ENCODE measurements at regions of chr6 and their contacts with region 1.

Region 1: DNA sequence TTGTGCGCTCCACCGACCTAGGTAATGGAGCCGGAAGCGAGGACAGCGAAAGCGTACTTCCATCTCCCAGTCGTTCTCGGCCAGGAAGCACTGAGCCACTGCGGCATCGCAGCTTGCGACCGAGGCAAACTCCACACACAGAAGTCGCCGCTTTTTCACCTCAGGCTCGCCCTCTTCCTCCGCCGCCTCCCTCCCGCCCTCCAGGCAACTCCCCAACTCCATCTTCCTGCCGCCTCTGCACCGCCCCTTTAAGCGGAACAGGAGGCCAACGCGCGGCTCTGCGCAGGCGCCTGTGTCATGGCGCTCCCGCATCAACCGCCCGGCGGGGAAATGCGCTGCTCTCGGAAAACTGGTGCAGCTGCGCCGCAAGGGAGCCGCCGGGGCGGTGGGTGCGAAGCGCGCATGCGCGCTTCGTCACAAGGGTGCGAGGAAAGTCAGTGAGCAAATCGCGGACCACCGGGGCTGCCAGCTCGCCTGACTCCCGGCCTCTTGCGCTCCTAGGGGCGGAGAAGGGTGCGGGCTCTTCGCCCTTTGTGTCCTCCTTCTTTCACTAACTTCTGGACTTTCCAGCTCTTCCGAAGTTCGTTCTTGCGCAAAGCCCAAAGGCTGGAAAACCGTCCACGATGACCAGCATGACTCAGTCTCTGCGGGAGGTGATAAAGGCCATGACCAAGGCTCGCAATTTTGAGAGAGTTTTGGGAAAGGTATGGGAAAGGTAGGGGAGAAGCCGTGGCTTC is at the starts of genes ACOT13 and TDP2:
- DNase-seq: peak; percentile 83 to 98 (median 94)

Region 2: DNA sequence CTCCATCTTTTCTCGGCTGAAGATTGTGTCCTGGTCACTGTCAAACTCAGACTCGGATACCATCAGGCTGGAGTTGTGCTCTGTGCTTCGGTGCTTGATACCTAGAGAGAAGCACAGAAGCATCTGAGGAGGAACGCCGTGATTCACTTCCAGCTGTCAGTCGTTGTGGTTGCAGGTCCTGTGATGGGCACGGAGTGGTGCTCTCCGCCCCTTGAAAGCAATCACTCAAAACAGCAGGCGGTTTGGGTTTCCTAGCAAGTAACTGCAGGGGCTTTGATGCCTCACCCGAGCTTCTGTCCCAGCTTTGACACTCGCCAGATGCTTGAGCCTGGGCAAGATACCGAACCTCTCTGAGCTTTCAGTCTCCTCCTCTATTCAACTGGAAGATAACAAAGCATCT is 119.6 kb before region 1 on chr6:
- intact Hi-C with region 1: no loop called
- DNase-seq: no peak

Region 3: DNA sequence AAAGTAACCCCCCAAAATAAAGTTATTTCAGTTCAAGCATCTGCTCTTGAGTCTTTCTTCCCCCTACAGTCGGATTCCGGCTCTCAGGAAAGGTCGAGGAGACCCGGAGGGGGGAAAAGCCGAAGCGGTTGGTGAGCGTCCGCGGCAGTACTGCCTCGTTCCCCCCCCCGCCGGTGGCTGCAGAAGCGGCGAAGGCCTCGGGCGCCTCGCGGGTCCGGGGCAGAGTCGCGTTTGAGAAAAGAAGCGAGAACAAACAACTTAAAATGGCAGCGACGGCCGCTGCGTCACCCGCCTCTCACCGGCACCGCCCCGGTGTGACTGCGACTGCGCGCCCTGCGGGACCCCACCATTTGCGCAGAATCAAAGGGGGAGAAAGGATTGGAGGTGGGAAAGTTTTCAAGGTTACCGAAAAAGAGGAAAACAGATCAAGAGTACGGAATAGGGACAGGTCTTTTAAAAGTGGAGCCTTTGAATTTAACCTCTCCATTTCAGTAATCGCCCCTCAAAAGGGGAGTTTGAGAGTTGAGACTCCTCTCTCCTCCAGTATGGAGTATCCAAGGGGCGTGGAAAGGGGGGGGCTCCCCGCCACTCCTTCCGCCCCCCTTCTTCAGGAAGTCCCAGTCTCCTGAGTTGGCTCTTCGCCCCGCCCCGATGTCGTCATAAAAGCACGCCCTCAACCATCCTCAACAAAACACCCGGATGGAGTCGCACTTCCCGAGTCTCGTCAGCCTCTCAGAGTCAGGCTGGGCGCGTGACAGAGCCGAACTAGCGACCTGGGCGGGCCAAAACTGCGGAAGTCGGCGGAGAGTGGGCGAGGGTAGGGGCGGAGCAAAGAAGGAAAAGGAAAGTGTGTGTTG is 54.0 kb after region 1 on chr6:
- intact Hi-C with region 1: loop called (anchors 2 kb)
- DNase-seq: peak; percentile 97 to 100 (median 100)

Region 4: DNA sequence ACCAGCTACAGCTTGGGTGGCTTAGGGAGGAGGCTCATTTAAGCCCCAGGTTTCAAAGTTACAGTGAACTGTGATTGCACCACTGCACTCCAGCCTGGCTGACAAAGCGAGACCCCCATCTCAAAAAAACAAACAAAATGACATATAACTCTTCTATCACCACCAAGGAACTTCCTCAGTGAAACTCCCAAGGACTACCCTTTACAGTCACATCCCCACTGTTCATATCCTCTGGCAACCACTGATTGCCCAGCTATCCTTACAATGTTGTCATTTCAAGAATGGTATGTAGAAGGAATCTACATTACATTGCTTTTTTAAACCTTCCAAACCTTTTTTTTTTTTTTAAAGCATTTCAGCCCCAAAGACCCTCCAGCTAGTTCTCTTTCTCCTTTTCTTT is 489.3 kb after region 1 on chr6:
- intact Hi-C with region 1: no loop called
- DNase-seq: no peak